Mammary epithelial cell (primary cell): ENCODE measurements at regions of chr6 and their contacts with region 1.

Region 1: DNA sequence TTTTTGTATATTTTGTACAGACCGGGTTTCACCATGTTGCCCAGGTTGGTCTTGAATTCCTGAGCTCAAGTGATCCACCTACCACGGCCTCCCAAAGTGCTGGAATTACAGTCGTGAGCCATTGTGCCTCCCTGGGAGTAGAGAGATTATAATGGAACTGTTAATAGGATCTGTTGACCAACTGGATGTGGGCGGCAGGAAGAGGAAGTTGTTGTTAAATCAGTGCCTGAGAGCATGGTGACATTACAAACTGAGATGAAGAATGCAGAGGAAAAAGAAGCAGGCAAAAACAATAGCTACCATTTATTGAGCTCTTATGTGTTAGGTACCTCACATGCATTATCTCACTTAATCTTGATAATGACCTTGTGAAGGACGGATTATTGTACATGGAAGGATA is 9.2 kb upstream of the L3MBTL3 start:
- DNase-seq: no peak
- H3K4me3 ChIP-seq: no peak overlapping the region
- H3K27ac ChIP-seq: no peak overlapping the region
- H3K4me1 ChIP-seq: no peaks in the 10 kb centered on the region
- H3K27me3 ChIP-seq: no peaks in the 10 kb centered on the region
- CTCF ChIP-seq: no peak

Region 2: GRCh38 chr6:129954749-129955431 is 54.3 kb before region 1 on chr6:
- CTCF ChIA-PET with region 1: no interaction called
- dilution Hi-C with region 1: loop called (anchors 10 kb)
- in situ Hi-C with region 1: no loop called
- intact Hi-C with region 1: no loop called
- DNase-seq: peak; percentile 59
- H3K4me3 ChIP-seq: no peak overlapping the region
- H3K27ac ChIP-seq: peak overlapping the region; percentile 42
- H3K4me1 ChIP-seq: peaks cover 13% of the 10 kb centered on the region
- H3K27me3 ChIP-seq: no peaks in the 10 kb centered on the region
- CTCF ChIP-seq: no peak